ENCODE measurements at regions of chr16 and their contacts with region 1.

Region 1: DNA sequence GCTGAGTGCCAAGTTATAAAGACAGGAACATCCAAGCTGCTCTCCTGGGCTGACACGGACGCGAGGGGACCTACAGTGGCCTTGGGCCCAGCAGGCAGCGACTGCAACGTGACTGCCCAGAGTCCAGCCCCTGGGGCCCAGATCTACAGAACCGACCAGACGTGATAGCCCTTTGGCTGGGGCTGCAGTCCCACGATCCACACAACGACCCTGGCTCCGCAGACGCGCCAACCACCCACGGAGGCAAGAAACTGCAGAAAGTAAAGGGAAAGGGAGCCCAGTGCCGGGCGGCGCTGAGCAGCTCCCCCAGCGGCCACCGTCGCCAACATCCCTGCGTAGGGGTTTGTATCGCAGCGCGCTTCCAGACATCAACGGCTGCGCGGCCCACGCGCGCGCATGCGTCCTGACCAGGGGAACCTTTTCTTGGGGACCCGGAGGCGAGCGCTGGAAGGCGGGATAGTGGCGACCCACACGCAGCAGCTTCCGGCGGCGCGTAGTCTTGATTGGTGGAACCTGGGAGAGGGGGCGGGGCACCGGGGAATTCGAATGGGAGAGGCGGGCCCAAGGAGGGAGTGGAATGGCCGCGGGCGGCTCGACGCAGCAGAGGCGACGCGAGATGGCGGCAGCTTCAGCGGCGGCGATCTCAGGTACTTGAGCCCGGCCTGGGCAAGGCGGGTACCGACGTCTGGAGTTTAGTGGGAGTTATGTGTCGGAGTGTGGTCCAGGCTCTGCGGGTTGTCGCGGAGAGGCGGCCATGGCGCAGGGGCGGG is at the start of gene KIF22:
- DNase-seq: peak; percentile 99
- H3K27ac ChIP-seq: peak within 1 kb of the TSS; percentile 87
- CTCF ChIP-seq: peak; percentile 83

Region 2: GRCh38 chr16:29653471-29653870 is 136.9 kb before region 1 on chr16:
- CTCF ChIA-PET with region 1: no interaction called
- POLR2A ChIA-PET with region 1: interaction called, 11 read pairs
- DNase-seq: no peak
- H3K27ac ChIP-seq: no peak overlapping the region
- CTCF ChIP-seq: no peak

Region 3: DNA sequence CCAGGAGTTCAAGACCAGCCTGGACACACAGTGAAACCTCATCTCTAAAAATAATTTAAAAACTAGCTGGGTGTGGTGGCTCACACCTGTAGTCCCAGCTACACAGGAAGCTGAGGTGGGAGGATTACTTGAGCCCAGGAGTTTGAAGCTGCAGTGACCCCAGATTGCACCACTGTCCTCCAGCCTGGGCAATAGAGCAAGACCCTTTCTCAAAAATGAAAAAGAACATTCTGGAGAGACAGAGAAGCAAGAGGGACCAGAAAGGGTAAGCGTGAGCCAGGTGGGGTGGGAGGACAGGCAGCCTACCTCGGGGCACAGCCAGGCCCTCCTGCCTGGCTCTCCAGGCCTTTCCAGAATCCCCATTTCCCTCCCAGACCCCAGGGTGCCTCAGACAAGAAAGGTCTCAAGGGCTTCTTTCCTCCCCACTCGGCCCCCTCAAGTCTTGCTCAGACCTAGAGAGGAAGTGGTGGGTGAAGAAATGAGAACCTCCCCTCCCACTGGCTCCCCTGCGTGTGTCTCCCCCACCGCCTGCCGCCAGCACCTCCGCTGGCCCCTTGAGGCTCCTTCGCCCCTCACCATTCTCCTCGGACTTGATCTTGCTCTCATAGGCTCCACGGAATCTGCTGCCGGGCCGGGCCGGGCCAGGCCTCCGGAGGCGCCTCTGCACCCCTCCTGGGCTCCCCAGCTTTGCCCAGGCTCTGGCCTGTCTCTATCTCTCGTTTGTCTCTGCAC is 45.1 kb before region 1 on chr16:
- CTCF ChIA-PET with region 1: no interaction called
- POLR2A ChIA-PET with region 1: no interaction called
- DNase-seq: no peak
- H3K27ac ChIP-seq: no peak overlapping the region
- CTCF ChIP-seq: no peak